Activated CD8-positive, alpha-beta T cell treated with anti-CD3 and anti-CD28 coated beads for 36 hours (primary cell): ENCODE measurements at regions of chr19 and their contacts with region 1.

Region 1: GRCh38 chr19:15101479-15102082 is 5.6 kb upstream of the SYDE1 start:
- DNase-seq: peak; percentile 83
- ATAC-seq: peak; percentile 91
- H3K4me3 Mint-ChIP-seq: no peak overlapping the region
- H3K27ac Mint-ChIP-seq: no peak overlapping the region
- H3K4me1 Mint-ChIP-seq: peaks cover under 1% of the 10 kb centered on the region
- H3K27me3 Mint-ChIP-seq: peaks cover 5% of the 10 kb centered on the region
- CTCF ChIP-seq: peak; percentile 79

Region 2: GRCh38 chr19:15015946-15016542 is 85.5 kb before region 1 on chr19:
- CTCF ChIA-PET with region 1: no interaction called
- POLR2A ChIA-PET with region 1: no interaction called
- intact Hi-C with region 1: no loop called
- DNase-seq: peak; percentile 24
- ATAC-seq: no peak
- H3K4me3 Mint-ChIP-seq: no peak overlapping the region
- H3K27ac Mint-ChIP-seq: no peak overlapping the region
- H3K4me1 Mint-ChIP-seq: no peaks in the 10 kb centered on the region
- H3K27me3 Mint-ChIP-seq: peaks cover 33% of the 10 kb centered on the region
- CTCF ChIP-seq: no peak

Region 3: DNA sequence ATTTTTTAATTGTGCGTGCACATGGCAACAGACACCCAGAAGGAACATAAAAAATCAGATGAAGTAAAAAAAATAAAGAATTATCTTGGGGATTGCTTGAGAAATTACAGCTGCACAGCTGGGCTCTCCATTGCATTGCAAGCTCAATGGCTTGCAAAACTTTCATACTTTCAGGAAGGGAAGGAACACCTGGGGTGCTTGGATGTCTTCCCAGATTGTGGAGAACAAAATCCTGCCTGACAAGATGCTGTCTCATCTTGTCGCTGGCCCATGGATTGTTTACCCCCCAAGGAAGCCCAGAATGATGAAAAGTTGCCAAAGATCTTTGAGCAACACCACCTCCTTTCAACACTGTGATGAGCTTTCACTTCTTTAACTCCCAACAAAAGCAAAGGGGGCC is 63.3 kb before region 1 on chr19:
- CTCF ChIA-PET with region 1: no interaction called
- POLR2A ChIA-PET with region 1: no interaction called
- intact Hi-C with region 1: no loop called
- DNase-seq: no peak
- ATAC-seq: no peak
- H3K4me3 Mint-ChIP-seq: no peak overlapping the region
- H3K27ac Mint-ChIP-seq: no peak overlapping the region
- H3K4me1 Mint-ChIP-seq: no peaks in the 10 kb centered on the region
- H3K27me3 Mint-ChIP-seq: peaks cover 20% of the 10 kb centered on the region
- CTCF ChIP-seq: no peak

Region 4: DNA sequence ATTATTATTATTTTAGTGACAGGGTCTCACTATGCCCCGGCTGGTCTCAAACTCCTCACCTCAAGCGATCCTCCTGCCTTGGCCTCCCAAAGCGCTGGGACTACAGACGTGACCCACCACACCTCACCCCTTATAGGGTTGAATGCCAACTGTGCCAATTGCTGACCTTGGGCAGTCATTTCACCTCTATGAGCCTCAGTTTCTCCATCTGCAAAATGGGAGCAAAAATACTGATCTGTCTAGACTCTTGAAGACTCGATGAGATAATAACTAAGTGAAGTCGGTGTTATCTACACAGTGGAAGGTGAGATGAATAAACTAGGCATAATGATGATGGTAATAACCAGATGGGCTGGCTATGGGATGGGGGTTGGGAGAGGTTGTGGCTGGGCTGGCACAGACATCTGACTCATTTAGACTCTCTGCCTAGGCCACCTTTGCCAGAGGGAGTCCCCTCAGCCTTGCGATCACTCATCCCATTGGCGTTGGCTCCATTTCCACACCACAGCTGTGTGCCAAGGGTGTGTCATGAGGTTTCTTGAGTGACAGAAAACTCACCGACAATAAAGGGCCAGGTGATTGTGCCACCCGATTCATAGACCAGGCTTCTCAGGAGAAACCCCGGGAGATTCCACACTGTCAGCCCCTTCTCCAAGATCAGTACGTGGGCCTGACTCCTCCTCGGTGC is 52.6 kb before region 1 on chr19 and contains the start of gene CASP14:
- CTCF ChIA-PET with region 1: no interaction called
- POLR2A ChIA-PET with region 1: no interaction called
- intact Hi-C with region 1: no loop called
- DNase-seq: no peak
- ATAC-seq: no peak
- H3K4me3 Mint-ChIP-seq: no peak within 1 kb of the TSS
- H3K27ac Mint-ChIP-seq: no peak within 1 kb of the TSS
- H3K4me1 Mint-ChIP-seq: no peaks in the 10 kb centered on the region
- H3K27me3 Mint-ChIP-seq: peaks cover 39% of the 10 kb centered on the region
- CTCF ChIP-seq: no peak
- total RNA-seq, gene CASP14: not detected

Region 5: GRCh38 chr19:15072930-15073647 is 28.5 kb before region 1 on chr19:
- CTCF ChIA-PET with region 1: no interaction called
- POLR2A ChIA-PET with region 1: no interaction called
- intact Hi-C with region 1: no loop called
- DNase-seq: peak; percentile 4
- ATAC-seq: no peak
- H3K4me3 Mint-ChIP-seq: no peak overlapping the region
- H3K27ac Mint-ChIP-seq: no peak overlapping the region
- H3K4me1 Mint-ChIP-seq: no peaks in the 10 kb centered on the region
- H3K27me3 Mint-ChIP-seq: peaks cover 6% of the 10 kb centered on the region
- CTCF ChIP-seq: no peak

Region 6: DNA sequence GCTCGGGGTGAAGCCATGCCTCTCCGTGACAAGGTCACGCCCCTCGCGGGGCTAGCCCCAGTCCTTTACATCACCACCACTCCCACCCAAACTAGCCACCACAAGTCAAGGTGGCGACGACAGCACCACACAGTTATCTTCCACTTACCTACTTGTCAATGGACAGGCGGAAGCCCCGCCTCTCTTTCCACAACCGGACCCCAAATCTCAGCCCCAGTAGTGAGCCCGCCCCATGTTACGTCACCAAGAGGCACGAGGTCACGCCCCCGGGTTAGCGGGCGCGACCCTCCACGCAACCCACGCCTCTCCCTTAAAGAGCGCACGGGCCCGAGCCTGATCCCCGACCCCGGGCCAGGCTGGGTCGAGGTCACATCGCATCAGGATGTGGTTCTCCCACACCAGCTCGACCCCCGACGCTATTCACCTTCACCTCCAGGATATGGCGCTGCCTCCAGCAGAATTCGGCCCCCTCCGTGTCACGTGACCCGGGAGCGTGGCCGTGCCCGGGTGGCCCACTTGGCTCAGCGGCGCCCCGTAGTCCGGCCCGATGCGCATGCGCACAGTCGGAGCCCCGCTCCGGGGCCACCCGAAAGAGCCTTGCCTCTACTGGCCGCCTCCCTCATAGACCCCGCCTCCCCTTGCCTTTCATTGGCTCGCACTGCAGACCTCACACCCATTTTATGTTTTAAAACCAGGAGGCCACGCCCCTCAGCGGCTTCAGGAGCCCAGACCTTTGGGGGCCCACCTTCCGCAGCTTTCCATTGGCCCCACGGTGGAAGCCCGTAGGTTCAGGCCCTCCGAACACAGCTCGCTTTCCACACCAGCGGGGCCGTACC is 23.9 kb after region 1 on chr19:
- CTCF ChIA-PET with region 1: interaction called, 25 read pairs
- POLR2A ChIA-PET with region 1: interaction called, 3 read pairs
- intact Hi-C with region 1: no loop called
- DNase-seq: peak; percentile 100
- ATAC-seq: peak; percentile 91
- H3K4me3 Mint-ChIP-seq: peak overlapping the region; percentile 94
- H3K27ac Mint-ChIP-seq: peak overlapping the region; percentile 99
- H3K4me1 Mint-ChIP-seq: peaks cover 23% of the 10 kb centered on the region
- H3K27me3 Mint-ChIP-seq: no peaks in the 10 kb centered on the region
- CTCF ChIP-seq: no peak

Region 7: DNA sequence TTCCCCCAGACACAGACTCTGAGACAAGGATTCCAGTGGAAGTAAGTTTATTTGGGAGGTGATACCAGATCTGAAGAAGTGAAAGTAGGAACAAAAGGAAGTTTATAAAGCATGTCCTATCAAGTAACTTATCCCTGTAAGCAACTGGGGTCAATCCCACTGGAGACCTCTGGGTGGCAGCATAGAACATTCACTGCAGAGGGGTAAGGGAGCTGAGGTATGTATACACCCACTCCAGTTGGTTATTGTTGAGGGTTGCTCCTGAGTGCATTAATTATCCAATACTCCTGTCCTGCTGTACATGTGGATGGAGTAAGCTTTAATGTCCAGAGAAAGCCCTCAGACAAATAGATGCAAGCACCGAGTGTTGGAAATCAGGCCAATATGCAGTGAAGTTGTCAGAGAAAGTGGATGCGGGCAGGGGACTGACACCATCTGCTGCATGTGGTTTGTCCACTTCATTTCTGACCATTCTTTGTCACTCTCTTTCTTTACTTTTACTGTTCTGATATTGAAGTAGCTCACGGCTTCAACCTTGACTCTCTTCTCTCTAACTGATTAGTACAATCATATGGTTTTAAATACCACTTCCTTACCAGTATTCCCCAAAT is 52.5 kb after region 1 on chr19:
- CTCF ChIA-PET with region 1: interaction called, 88 read pairs
- POLR2A ChIA-PET with region 1: no interaction called
- intact Hi-C with region 1: loop called (anchors 2 kb)
- DNase-seq: peak; percentile 68
- ATAC-seq: peak; percentile 71
- H3K4me3 Mint-ChIP-seq: no peak overlapping the region
- H3K27ac Mint-ChIP-seq: no peak overlapping the region
- H3K4me1 Mint-ChIP-seq: peaks cover 5% of the 10 kb centered on the region
- H3K27me3 Mint-ChIP-seq: peaks cover 11% of the 10 kb centered on the region
- CTCF ChIP-seq: peak; percentile 66

Region 8: GRCh38 chr19:15159251-15159650 is 57.7 kb after region 1 on chr19:
- CTCF ChIA-PET with region 1: interaction called, 88 read pairs
- POLR2A ChIA-PET with region 1: no interaction called
- intact Hi-C with region 1: no loop called
- DNase-seq: no peak
- ATAC-seq: no peak
- H3K4me3 Mint-ChIP-seq: no peak overlapping the region
- H3K27ac Mint-ChIP-seq: no peak overlapping the region
- H3K4me1 Mint-ChIP-seq: no peaks in the 10 kb centered on the region
- H3K27me3 Mint-ChIP-seq: peaks cover 3% of the 10 kb centered on the region
- CTCF ChIP-seq: no peak